ENCODE measurements at regions of chr17 and their contacts with region 1.

Region 1: GRCh38 chr17:35906191-35906922 is 24.2 kb downstream of the RDM1 start:
- DNase-seq: no peak
- H3K4me3 ChIP-seq: no peak overlapping the region
- H3K4me3 Mint-ChIP-seq: no peak overlapping the region
- H3K27ac ChIP-seq: no peak overlapping the region
- H3K27ac Mint-ChIP-seq: peak overlapping the region in 1 of 7 donors; percentile 11
- H3K4me1 ChIP-seq: no peaks in the 10 kb centered on the region
- H3K4me1 Mint-ChIP-seq: peaks cover 0 to 9% (median 6%) of the 10 kb centered on the region in 4 donors
- H3K27me3 ChIP-seq: no peaks in the 10 kb centered on the region
- H3K27me3 Mint-ChIP-seq: no peaks in the 10 kb centered on the region

Region 2: GRCh38 chr17:35870906-35871819 is 35.2 kb before region 1 on chr17:
- CTCF ChIA-PET with region 1: interaction called, 6 read pairs
- POLR2A ChIA-PET with region 1: interaction called, 113 read pairs
- intact Hi-C with region 1: loop called (anchors 5 kb)
- DNase-seq: peak in 4 of 5 donors; percentile 26 to 49 (median 36)
- H3K4me3 ChIP-seq: no peak overlapping the region
- H3K4me3 Mint-ChIP-seq: peak overlapping the region in 1 of 8 donors; percentile 13
- H3K27ac ChIP-seq: no peak overlapping the region
- H3K27ac Mint-ChIP-seq: peak overlapping the region in 5 of 7 donors; percentile 6 to 55 (median 43)
- H3K4me1 ChIP-seq: peaks cover 15% of the 10 kb centered on the region
- H3K4me1 Mint-ChIP-seq: peaks cover 14 to 48% (median 30%) of the 10 kb centered on the region in 4 donors
- H3K27me3 ChIP-seq: no peaks in the 10 kb centered on the region
- H3K27me3 Mint-ChIP-seq: no peaks in the 10 kb centered on the region

Region 3: DNA sequence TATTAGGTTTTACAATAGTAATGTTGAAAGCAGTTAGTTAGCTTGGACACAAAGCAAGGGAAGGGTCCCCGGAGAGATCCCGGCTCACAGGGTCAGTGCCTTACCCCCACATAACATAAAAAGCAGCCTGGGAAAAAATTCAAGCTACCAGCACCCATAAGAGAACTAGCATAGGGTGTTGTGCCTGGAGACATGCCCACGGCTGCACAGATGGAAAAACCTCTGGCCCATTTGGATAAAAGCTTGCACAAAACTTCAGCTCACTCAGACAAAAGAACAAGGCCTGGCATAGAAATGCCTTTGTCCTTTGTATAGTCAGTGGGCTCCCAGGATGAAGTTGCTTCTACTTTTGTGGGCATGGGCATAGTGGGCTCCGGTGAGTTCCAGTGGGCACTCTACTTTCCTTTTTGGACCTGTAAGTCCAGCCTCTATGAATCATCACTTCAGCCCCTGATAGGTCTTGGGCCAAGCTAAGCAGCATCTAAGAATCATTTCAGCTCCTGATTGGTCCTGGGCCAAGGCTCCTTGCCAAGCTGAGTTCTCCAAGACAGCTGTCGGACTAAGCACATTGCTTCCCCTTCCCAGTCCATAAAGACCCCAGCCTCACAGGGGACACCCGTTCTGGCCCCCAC is 25.6 kb after region 1 on chr17:
- CTCF ChIA-PET with region 1: no interaction called
- POLR2A ChIA-PET with region 1: no interaction called
- intact Hi-C with region 1: no loop called
- DNase-seq: no peak
- H3K4me3 ChIP-seq: no peak overlapping the region
- H3K4me3 Mint-ChIP-seq: peak overlapping the region in 1 of 8 donors; percentile 9
- H3K27ac ChIP-seq: no peak overlapping the region
- H3K27ac Mint-ChIP-seq: no peak overlapping the region
- H3K4me1 ChIP-seq: peaks cover 13% of the 10 kb centered on the region
- H3K4me1 Mint-ChIP-seq: peaks cover 7 to 20% (median 12%) of the 10 kb centered on the region in 4 donors
- H3K27me3 ChIP-seq: no peaks in the 10 kb centered on the region
- H3K27me3 Mint-ChIP-seq: no peaks in the 10 kb centered on the region

Measured in CD4-positive, alpha-beta memory T cell (primary cell).